ENCODE measurements at regions of chr2 and their contacts with region 1.

Region 1: DNA sequence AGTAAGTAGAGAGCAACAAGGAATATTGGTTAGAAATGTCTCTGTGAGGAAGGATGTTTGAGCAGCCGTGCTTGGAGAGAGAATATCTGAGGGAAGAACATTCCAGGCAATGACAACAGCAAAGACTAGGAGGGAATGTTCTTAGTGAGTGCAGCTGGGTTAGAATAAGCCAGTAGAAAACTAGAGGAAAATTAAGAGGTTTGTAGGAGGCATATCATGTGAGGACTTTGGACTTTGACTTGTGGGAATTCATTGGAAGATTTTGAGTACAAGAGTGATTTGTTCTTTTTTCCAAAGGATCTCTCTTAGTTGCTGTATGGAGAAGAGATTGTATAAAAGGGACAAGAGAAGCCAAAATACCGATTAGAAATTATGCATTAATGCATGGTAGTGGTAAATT is 47.2 kb downstream of the PPM1B start:
- DNase-seq: no peak
- H3K4me3 ChIP-seq: no peak overlapping the region
- H3K4me3 Mint-ChIP-seq: no peak overlapping the region
- H3K27ac ChIP-seq: no peak overlapping the region
- H3K27ac Mint-ChIP-seq: peak overlapping the region in 5 of 7 donors; percentile 3 to 79 (median 55)
- H3K4me1 ChIP-seq: no peaks in the 10 kb centered on the region
- H3K4me1 Mint-ChIP-seq: peaks cover 10 to 31% (median 21%) of the 10 kb centered on the region in 4 donors
- H3K27me3 ChIP-seq: no peaks in the 10 kb centered on the region
- H3K27me3 Mint-ChIP-seq: no peaks in the 10 kb centered on the region

Region 2: DNA sequence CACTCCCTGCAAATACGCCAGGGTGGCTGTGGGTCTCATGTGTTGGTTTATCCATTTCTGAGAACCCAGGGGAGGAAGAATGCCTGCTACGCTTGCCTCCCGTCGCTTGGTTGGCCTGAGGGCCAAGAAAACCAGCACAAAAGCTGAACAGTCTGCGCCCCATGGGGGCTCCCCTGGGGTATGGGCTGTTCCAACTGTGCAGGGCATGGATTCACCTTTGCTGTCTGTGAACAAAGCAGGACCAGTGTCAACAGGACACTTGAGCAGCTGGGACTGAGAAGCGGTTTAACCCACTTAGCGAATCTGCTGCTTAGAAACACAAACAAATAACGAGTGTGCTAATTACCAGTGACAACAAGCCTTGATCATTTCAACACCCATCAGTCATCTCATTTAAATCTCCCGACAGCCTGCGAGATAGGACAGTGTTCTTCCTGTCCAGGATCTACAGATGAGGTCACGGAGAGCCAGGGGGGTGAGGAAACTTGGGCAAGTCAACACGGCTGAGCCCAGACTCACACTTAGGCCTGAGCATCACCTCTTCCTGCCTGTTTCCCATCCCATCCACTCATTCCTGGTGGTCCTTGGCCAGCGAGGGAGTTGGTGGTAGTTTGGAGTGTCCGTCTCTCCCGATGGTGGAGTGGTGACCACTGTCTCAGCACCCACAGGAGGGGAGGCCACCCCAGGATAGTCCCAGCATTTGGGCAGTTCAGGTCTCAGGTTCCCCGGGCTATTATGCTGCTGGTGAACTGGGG is 1311.8 kb before region 1 on chr2:
- CTCF ChIA-PET with region 1: no interaction called
- POLR2A ChIA-PET with region 1: no interaction called
- intact Hi-C with region 1: no loop called
- DNase-seq: no peak
- H3K4me3 ChIP-seq: no peak overlapping the region
- H3K4me3 Mint-ChIP-seq: no peak overlapping the region
- H3K27ac ChIP-seq: no peak overlapping the region
- H3K27ac Mint-ChIP-seq: no peak overlapping the region
- H3K4me1 ChIP-seq: no peaks in the 10 kb centered on the region
- H3K4me1 Mint-ChIP-seq: no peaks in the 10 kb centered on the region
- H3K27me3 ChIP-seq: no peaks in the 10 kb centered on the region
- H3K27me3 Mint-ChIP-seq: peaks cover 5 to 10% of the 10 kb centered on the region in 2 donors

Region 3: DNA sequence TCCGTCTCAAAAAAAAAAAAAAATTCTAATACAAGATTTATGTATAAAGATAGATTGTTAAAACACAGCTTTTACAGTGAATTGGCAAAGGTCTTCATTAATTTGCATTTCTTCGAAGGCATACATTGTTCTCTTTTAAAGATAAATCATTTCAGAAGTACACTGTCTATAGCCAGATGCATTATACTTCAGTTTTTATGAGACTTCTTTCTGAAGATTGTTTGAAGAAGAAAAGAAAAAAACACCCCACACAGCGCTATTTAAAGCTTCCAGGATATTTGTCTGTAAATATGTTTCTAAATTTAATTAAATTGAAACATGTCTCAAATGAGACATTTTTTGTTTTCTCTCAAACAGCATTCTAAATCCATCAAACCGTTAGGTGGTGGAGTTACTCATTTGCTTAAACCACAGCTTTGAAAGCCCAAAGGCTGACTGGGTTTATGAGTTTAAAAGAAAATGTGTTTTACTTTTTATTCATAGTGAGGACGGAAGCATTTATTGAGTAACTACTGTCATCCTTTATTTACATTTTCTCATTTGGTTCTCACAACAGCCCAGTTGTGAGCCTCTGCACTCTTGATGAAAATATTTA is 497.2 kb before region 1 on chr2:
- CTCF ChIA-PET with region 1: no interaction called
- POLR2A ChIA-PET with region 1: no interaction called
- intact Hi-C with region 1: no loop called
- DNase-seq: no peak
- H3K4me3 ChIP-seq: no peak overlapping the region
- H3K4me3 Mint-ChIP-seq: no peak overlapping the region
- H3K27ac ChIP-seq: no peak overlapping the region
- H3K27ac Mint-ChIP-seq: no peak overlapping the region
- H3K4me1 ChIP-seq: no peaks in the 10 kb centered on the region
- H3K4me1 Mint-ChIP-seq: no peaks in the 10 kb centered on the region
- H3K27me3 ChIP-seq: no peaks in the 10 kb centered on the region
- H3K27me3 Mint-ChIP-seq: peaks cover 1 to 7% of the 10 kb centered on the region in 2 donors

Region 4: GRCh38 chr2:44233450-44234128 is 17.8 kb after region 1 on chr2:
- CTCF ChIA-PET with region 1: interaction called, 4 read pairs
- POLR2A ChIA-PET with region 1: no interaction called
- intact Hi-C with region 1: loop called (anchors 2 kb)
- DNase-seq: no peak
- H3K4me3 ChIP-seq: no peak overlapping the region
- H3K4me3 Mint-ChIP-seq: no peak overlapping the region
- H3K27ac ChIP-seq: no peak overlapping the region
- H3K27ac Mint-ChIP-seq: peak overlapping the region in 3 of 7 donors; percentile 7 to 64 (median 10)
- H3K4me1 ChIP-seq: peaks cover 19% of the 10 kb centered on the region
- H3K4me1 Mint-ChIP-seq: peaks cover 19 to 30% (median 22%) of the 10 kb centered on the region in 4 donors
- H3K27me3 ChIP-seq: no peaks in the 10 kb centered on the region
- H3K27me3 Mint-ChIP-seq: no peaks in the 10 kb centered on the region

Region 5: GRCh38 chr2:44330801-44331200 is 115.0 kb after region 1 on chr2:
- CTCF ChIA-PET with region 1: no interaction called
- POLR2A ChIA-PET with region 1: no interaction called
- intact Hi-C with region 1: no loop called
- DNase-seq: no peak
- H3K4me3 ChIP-seq: no peak overlapping the region
- H3K4me3 Mint-ChIP-seq: no peak overlapping the region
- H3K27ac ChIP-seq: no peak overlapping the region
- H3K27ac Mint-ChIP-seq: peak overlapping the region in 3 of 7 donors; percentile 13 to 48 (median 31)
- H3K4me1 ChIP-seq: no peaks in the 10 kb centered on the region
- H3K4me1 Mint-ChIP-seq: peaks cover 0 to 12% (median 5%) of the 10 kb centered on the region in 4 donors
- H3K27me3 ChIP-seq: no peaks in the 10 kb centered on the region
- H3K27me3 Mint-ChIP-seq: no peaks in the 10 kb centered on the region